B cell (primary cell): ENCODE measurements at regions of chr18 and their contacts with region 1.

Region 1: GRCh38 chr18:58051765-58052460 is 7.9 kb downstream of the NEDD4L start:
- DNase-seq: no peak
- ATAC-seq: peak; percentile 24
- H3K4me3 ChIP-seq: no peak overlapping the region
- H3K4me3 Mint-ChIP-seq: no peak overlapping the region
- H3K27ac ChIP-seq: no peak overlapping the region
- H3K27ac Mint-ChIP-seq: no peak overlapping the region
- H3K4me1 ChIP-seq: no peaks in the 10 kb centered on the region
- H3K4me1 Mint-ChIP-seq: peaks cover 9% of the 10 kb centered on the region
- H3K27me3 ChIP-seq: no peaks in the 10 kb centered on the region
- H3K27me3 Mint-ChIP-seq: no peaks in the 10 kb centered on the region
- CTCF ChIP-seq: peak; percentile 40

Region 2: DNA sequence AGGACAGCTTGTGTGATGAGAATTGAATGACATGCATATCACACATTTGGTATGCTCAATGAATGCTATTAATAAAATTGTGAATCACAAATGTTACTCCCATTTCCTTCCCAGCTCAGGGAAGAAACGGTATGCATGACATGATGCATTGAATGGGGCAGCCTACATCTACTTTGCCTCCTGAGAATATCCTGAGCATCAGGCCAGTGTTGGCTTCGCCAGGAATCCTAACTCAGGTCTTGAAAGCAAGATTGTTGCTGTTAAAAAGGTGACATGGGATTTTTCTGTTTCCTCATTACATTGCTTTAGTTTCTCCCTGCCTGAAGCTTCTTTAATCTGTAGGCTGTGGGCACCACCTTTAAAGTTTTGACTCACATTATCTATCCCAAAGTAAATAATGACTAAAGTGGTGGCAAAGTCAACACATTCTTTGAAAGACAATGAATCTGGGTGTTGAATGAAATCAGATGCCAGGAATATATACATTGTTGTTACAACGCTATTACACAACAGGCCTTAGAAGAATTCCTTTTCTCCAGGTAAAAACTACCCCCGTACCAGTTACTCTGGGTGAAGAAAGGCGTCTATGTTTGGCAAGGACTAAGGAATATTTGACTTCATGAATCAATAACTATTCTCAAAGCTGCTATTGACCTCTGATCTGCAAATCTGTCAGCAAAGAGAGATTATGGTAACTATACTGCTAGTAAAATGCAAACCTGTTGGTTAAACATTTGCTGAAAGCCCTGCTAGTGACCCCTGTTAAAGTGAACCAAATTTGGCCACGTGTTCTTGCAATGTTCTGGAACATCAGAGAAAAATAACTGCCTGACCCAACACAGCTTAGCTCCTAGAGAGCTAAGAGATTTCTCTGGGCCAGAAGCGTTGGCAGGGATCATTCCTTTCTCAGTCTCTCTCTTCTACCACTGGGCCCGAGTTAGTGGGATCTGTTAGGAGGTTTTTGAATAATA is 38.4 kb before region 1 on chr18:
- CTCF ChIA-PET with region 1: no interaction called
- POLR2A ChIA-PET with region 1: no interaction called
- intact Hi-C with region 1: no loop called
- DNase-seq: no peak
- ATAC-seq: no peak
- H3K4me3 ChIP-seq: no peak overlapping the region
- H3K4me3 Mint-ChIP-seq: no peak overlapping the region
- H3K27ac ChIP-seq: no peak overlapping the region
- H3K27ac Mint-ChIP-seq: no peak overlapping the region
- H3K4me1 ChIP-seq: peaks cover 23 to 34% of the 10 kb centered on the region in 2 donors
- H3K4me1 Mint-ChIP-seq: peaks cover 31% of the 10 kb centered on the region
- H3K27me3 ChIP-seq: no peaks in the 10 kb centered on the region
- H3K27me3 Mint-ChIP-seq: peaks cover 23% of the 10 kb centered on the region
- CTCF ChIP-seq: no peak

Region 3: GRCh38 chr18:58024139-58024538 is 27.8 kb before region 1 on chr18:
- CTCF ChIA-PET with region 1: no interaction called
- POLR2A ChIA-PET with region 1: no interaction called
- intact Hi-C with region 1: no loop called
- DNase-seq: no peak
- ATAC-seq: no peak
- H3K4me3 ChIP-seq: no peak overlapping the region
- H3K4me3 Mint-ChIP-seq: no peak overlapping the region
- H3K27ac ChIP-seq: no peak overlapping the region
- H3K27ac Mint-ChIP-seq: no peak overlapping the region
- H3K4me1 ChIP-seq: no peaks in the 10 kb centered on the region
- H3K4me1 Mint-ChIP-seq: no peaks in the 10 kb centered on the region
- H3K27me3 ChIP-seq: peaks cover 0 to 6% (median 2%) of the 10 kb centered on the region in 4 experiments
- H3K27me3 Mint-ChIP-seq: no peaks in the 10 kb centered on the region
- CTCF ChIP-seq: no peak

Region 4: GRCh38 chr18:58699551-58699950 is 647.6 kb after region 1 on chr18:
- CTCF ChIA-PET with region 1: no interaction called
- POLR2A ChIA-PET with region 1: interaction called, 11 read pairs
- intact Hi-C with region 1: no loop called
- DNase-seq: no peak
- ATAC-seq: no peak
- H3K4me3 ChIP-seq: no peak overlapping the region
- H3K4me3 Mint-ChIP-seq: no peak overlapping the region
- H3K27ac ChIP-seq: no peak overlapping the region
- H3K27ac Mint-ChIP-seq: no peak overlapping the region
- H3K4me1 ChIP-seq: peaks cover 0 to 2% of the 10 kb centered on the region in 2 donors
- H3K4me1 Mint-ChIP-seq: peaks cover 20% of the 10 kb centered on the region
- H3K27me3 ChIP-seq: no peaks in the 10 kb centered on the region
- H3K27me3 Mint-ChIP-seq: no peaks in the 10 kb centered on the region
- CTCF ChIP-seq: no peak